Gastrocnemius medialis (tissue), 4 donors: ENCODE measurements at regions of chr20 and their contacts with region 1.

Region 1: DNA sequence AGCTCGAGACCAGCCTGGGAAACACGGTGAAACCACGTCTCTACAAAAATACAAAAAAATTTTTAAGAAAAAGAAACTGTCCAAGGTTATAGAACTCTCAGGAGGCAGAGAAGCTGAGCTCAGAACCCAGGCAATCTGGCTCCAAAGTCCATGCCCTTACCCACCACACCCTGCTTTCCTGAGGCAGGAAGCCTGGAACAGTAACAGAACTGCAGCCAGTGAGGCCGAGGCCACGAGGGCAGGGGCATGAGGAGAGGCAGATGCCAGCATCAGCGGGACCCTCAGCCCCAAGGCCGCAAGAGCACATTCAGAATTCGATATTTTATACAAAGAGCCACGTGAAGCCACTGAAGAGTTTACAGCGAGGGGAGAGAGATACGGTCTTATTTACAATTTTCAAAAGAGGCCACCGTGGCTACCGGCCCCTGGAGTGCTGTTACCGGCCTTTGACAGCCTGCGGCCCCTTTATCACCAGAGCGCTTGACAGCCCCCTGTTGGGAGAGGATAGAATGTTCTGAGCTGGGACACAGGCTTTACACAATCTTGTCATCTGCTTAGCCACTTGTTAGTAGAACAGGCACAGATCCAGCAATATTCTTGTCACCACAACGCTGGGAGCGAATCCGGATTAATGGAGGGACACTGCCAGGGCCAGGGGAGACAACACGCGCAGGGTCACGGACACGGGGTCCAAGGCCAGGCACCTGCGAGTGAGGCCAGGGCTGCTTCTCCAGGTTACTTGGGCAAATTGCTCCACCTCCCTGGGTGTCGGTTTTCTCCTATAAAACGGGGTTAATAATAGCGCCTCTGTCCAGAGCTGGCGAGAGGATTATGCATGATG is 5.6 kb downstream of the SPATA2 start:
- DNase-seq: peak; percentile 78 to 95
- ATAC-seq: peak; percentile 93
- H3K4me3 ChIP-seq: peak overlapping the region; percentile 29 to 49 (median 40)
- H3K27ac ChIP-seq: peak overlapping the region; percentile 92 to 100 (median 97)
- H3K4me1 ChIP-seq: peaks cover 38 to 62% of the 10 kb centered on the region in 2 donors
- H3K27me3 ChIP-seq: no peaks in the 10 kb centered on the region
- CTCF ChIP-seq: peak; percentile 51 to 77 (median 60)
- POLR2A ChIP-seq: peak; percentile 46 to 85

Region 2: GRCh38 chr20:49821870-49822331 is 87.8 kb before region 1 on chr20:
- in situ Hi-C with region 1: no loop called
- intact Hi-C with region 1: loop called (anchors 1 kb)
- DNase-seq: peak in 1 of 2 donors; percentile 35
- ATAC-seq: peak; percentile 59 to 62
- H3K4me3 ChIP-seq: no peak overlapping the region
- H3K27ac ChIP-seq: peak overlapping the region; percentile 81 to 89 (median 88)
- H3K4me1 ChIP-seq: peaks cover 26 to 51% of the 10 kb centered on the region in 2 donors
- H3K27me3 ChIP-seq: no peaks in the 10 kb centered on the region
- CTCF ChIP-seq: peak in 2 of 5 experiments; percentile 23 to 29
- POLR2A ChIP-seq: no peak

Region 3: DNA sequence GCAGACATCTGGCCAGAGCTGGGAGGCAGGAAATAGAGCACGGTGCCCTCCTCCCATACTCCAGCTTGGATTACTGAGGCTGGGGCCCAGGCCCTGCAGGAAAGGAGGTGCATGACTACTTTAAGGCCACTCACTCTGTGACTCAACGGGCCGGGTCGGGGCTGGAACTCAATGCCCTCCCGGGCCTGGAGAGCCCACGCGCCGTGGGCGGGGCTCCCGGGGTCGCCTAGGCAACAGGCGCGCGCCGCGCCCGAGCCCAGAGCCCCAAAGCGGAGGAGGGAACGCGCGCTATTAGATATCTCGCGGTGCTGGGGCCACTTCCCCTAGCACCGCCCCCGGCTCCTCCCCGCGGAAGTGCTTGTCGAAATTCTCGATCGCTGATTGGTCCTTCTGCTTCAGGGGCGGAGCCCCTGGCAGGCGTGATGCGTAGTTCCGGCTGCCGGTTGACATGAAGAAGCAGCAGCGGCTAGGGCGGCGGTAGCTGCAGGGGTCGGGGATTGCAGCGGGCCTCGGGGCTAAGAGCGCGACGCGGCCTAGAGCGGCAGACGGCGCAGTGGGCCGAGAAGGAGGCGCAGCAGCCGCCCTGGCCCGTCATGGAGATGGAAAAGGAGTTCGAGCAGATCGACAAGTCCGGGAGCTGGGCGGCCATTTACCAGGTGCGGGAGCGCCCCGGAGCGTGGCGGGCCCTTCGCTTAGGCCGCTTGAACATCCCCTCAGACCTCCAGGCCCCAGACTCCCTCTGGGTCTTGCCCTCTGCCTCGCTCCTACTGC is 600.4 kb after region 1 on chr20 and contains the start of gene PTPN1:
- in situ Hi-C with region 1: no loop called
- intact Hi-C with region 1: no loop called
- DNase-seq: peak; percentile 98
- ATAC-seq: peak; percentile 90 to 97
- H3K4me3 ChIP-seq: peak within 1 kb of the TSS; percentile 90 to 100 (median 94)
- H3K27ac ChIP-seq: peak within 1 kb of the TSS; percentile 92 to 99 (median 96)
- H3K4me1 ChIP-seq: peaks cover 42 to 44% of the 10 kb centered on the region in 2 donors
- H3K27me3 ChIP-seq: no peaks in the 10 kb centered on the region
- CTCF ChIP-seq: peak in 2 of 5 experiments; percentile 11 to 25
- POLR2A ChIP-seq: peak; percentile 99
- total RNA-seq, gene PTPN1: 21.8 to 46.8 (median 44.4) TPM